ENCODE measurements at regions of chr7 and their contacts with region 1.

Region 1: GRCh38 chr7:30389791-30390190 is 88.8 kb downstream of the NOD1 start:
- DNase-seq: no peak
- ATAC-seq: no peak
- H3K4me3 ChIP-seq: no peak overlapping the region
- H3K27ac ChIP-seq: no peak overlapping the region
- H3K4me1 ChIP-seq: no peaks in the 10 kb centered on the region
- H3K27me3 ChIP-seq: no peaks in the 10 kb centered on the region
- CTCF ChIP-seq: no peak
- POLR2A ChIP-seq: no peak
- RAD21 ChIP-seq: no peak

Region 2: DNA sequence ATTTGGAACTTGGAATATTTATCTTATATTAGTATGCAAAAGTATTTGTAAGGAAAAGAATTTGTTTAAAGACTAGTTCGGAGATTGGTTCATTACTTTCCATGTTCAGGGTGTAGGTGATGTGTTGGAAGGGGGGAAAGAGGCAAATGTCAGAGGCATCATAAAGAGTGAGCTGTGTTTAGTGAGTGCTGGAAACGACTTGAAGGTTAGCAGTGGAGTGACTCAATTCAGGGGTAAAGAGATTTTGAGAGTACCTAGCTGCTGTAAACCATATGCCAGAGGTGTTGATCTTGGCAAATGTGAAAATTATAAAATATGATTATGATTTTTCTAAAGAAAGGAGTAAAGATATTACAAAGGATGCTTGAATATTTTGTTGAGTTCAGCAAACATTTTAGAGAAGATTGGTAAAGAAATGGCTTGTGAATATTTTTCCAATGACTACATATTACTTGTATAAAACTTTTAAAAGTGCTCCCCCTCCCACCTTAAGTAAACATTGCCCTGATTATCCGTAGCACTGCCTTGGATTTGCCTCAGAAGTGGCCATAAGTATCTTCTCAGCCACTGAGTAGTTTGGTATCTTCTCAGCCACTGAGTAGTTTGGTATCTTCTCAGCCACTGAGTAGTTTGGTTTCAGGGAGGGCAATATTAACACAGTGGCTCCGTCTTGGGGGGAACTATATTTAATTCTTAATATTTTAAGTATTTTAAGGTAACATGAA is 53.9 kb before region 1 on chr7:
- CTCF ChIA-PET with region 1: no interaction called
- POLR2A ChIA-PET with region 1: interaction called, 10 read pairs
- dilution Hi-C with region 1: no loop called
- in situ Hi-C with region 1: no loop called
- intact Hi-C with region 1: no loop called
- DNase-seq: peak; percentile 25
- ATAC-seq: peak; percentile 48
- H3K4me3 ChIP-seq: no peak overlapping the region
- H3K27ac ChIP-seq: no peak overlapping the region
- H3K4me1 ChIP-seq: no peaks in the 10 kb centered on the region
- H3K27me3 ChIP-seq: no peaks in the 10 kb centered on the region
- CTCF ChIP-seq: no peak
- POLR2A ChIP-seq: no peak
- RAD21 ChIP-seq: no peak

Region 3: GRCh38 chr7:30378275-30378674 is 11.5 kb before region 1 on chr7:
- CTCF ChIA-PET with region 1: no interaction called
- POLR2A ChIA-PET with region 1: no interaction called
- dilution Hi-C with region 1: no loop called
- in situ Hi-C with region 1: no loop called
- intact Hi-C with region 1: no loop called
- DNase-seq: no peak
- ATAC-seq: no peak
- H3K4me3 ChIP-seq: no peak overlapping the region
- H3K27ac ChIP-seq: no peak overlapping the region
- H3K4me1 ChIP-seq: no peaks in the 10 kb centered on the region
- H3K27me3 ChIP-seq: no peaks in the 10 kb centered on the region
- CTCF ChIP-seq: no peak
- POLR2A ChIP-seq: no peak
- RAD21 ChIP-seq: no peak